Activated naive CD4-positive, alpha-beta T cell treated with anti-CD3 and anti-CD28 coated beads for 36 hours (primary cell): ENCODE measurements at regions of chr1 and their contacts with region 1.

Region 1: GRCh38 chr1:167650269-167651160 is 20.5 kb downstream of the RCSD1 start:
- DNase-seq: peak; percentile 39
- H3K4me3 Mint-ChIP-seq: peak overlapping the region; percentile 13
- H3K27ac Mint-ChIP-seq: peak overlapping the region; percentile 55
- H3K4me1 Mint-ChIP-seq: peaks cover 84% of the 10 kb centered on the region
- H3K27me3 Mint-ChIP-seq: no peaks in the 10 kb centered on the region

Region 2: GRCh38 chr1:167666416-167666815 is 15.9 kb after region 1 on chr1:
- CTCF ChIA-PET with region 1: interaction called, 3 read pairs
- intact Hi-C with region 1: loop called (anchors 2 kb)
- DNase-seq: no peak
- H3K4me3 Mint-ChIP-seq: no peak overlapping the region
- H3K27ac Mint-ChIP-seq: no peak overlapping the region
- H3K4me1 Mint-ChIP-seq: peaks cover 73% of the 10 kb centered on the region
- H3K27me3 Mint-ChIP-seq: no peaks in the 10 kb centered on the region